Posterior cingulate gyrus (tissue), 11 donors: ENCODE measurements at regions of chr12 and their contacts with region 1.

Region 1: DNA sequence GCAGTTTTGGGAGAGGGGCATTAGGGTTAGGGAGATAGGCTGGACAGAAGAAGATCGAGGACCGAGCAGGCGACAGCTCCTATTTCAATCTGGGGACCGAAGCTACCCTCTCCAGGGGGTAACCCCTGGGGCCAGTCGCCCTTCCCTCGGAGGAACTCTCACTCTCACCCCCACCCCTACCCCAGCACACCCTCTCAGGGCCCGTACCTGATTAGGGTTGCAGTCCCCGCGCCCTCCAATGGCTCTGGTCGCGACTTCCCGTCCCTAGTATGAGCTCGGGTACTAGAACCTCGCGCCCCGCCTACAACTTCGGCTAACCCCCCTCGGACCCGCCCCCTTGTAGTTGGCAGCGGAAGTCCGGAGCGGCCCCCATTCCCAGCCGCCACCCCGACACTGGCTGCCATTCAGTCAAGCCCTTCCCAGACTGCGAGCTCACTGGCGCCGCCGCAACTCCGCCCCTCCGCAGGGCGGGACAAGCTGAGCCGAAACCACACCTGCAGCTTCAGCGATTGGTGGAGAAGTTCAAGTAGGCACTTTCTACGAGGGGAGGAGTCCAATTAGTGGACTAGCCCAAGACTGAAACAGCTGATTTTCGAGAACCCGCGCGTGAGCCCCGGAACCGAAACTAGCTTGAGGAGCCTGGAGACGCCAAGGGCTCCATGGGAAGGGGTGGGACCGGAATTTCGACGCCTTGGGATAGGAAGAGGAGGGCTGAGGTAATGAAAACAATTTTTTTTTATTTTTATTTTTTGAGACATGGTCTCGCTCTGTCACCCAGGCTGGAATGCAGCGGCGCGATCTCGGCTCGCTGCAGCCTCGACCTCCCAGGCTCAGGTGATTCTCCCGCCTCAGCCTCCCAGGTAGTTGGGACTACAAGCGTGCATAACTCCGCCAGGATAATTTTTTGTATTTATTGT is at the start of gene STAT2:
- DNase-seq: peak; percentile 97 to 100 (median 99)

Region 2: GRCh38 chr12:56448860-56449621 is 88.9 kb after region 1 on chr12 and contains the start of gene TIMELESS:
- intact Hi-C with region 1: loop called (anchors 2 kb)
- DNase-seq: peak; percentile 83 to 99 (median 88)

Region 3: DNA sequence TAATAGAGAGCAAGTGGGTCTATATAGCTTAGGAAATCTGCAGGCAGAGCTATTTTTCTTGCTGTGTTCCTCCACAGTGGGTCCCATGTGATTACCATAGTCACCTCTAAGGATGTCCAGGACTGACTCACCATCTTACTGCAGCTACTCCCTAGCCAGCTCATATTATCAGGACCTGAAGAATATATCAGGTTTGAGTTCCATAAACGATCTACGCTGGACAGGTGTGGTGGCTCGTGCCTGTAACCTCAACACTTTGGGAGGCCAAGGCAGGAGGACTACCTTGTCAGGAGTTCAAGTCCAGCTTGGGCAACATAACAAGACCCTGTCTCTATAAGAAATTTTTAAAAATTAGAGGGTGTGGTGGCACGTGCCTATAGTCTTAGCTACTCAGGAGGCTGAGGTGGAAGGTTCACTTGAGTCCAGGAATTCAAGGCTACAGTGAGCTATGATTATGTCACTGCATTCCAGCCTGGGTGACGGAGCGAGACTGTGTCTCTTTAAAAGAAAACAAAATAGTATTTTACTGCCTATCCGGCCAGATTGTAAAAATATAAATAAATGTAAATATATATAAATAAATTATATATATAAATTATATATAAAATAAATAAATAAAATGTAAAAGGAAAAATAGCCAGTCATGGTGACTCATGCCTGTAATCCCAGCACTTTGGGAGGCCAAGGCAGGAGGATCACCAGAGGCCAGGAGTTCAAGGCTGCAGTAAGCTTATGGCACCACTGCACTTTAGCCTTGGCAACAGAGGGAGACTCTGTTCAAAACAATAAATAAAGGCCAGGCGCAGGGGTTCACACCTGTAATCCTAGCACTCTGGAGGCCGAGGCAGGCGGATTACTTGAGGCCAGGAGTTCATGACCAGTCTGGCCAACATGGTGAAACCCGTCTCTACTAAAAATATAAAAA is 101.4 kb after region 1 on chr12:
- intact Hi-C with region 1: loop called (anchors 5 kb)
- DNase-seq: peak in 2 of 10 donors; percentile 16 to 25